Gastrocnemius medialis (tissue), 4 donors: ENCODE measurements at regions of chr6 and their contacts with region 1.

Region 1: GRCh38 chr6:142946181-142946923 is 1.4 kb upstream of the HIVEP2 start:
- DNase-seq: peak; percentile 99
- ATAC-seq: peak; percentile 66 to 68
- H3K4me3 ChIP-seq: peak overlapping the region; percentile 82 to 98 (median 88)
- H3K27ac ChIP-seq: peak overlapping the region; percentile 94 to 100 (median 98)
- H3K4me1 ChIP-seq: peaks cover 28 to 33% of the 10 kb centered on the region in 2 donors
- H3K27me3 ChIP-seq: no peaks in the 10 kb centered on the region
- CTCF ChIP-seq: no peak
- POLR2A ChIP-seq: peak; percentile 91 to 96

Region 2: GRCh38 chr6:142819603-142820337 is 126.6 kb before region 1 on chr6:
- in situ Hi-C with region 1: no loop called
- intact Hi-C with region 1: loop called (anchors 5 kb)
- DNase-seq: no peak
- ATAC-seq: peak in 1 of 2 donors; percentile 55
- H3K4me3 ChIP-seq: peak overlapping the region; percentile 33 to 40 (median 35)
- H3K27ac ChIP-seq: peak overlapping the region; percentile 63 to 73 (median 69)
- H3K4me1 ChIP-seq: peaks cover 50 to 65% of the 10 kb centered on the region in 2 donors
- H3K27me3 ChIP-seq: no peaks in the 10 kb centered on the region
- CTCF ChIP-seq: no peak
- POLR2A ChIP-seq: no peak

Region 3: DNA sequence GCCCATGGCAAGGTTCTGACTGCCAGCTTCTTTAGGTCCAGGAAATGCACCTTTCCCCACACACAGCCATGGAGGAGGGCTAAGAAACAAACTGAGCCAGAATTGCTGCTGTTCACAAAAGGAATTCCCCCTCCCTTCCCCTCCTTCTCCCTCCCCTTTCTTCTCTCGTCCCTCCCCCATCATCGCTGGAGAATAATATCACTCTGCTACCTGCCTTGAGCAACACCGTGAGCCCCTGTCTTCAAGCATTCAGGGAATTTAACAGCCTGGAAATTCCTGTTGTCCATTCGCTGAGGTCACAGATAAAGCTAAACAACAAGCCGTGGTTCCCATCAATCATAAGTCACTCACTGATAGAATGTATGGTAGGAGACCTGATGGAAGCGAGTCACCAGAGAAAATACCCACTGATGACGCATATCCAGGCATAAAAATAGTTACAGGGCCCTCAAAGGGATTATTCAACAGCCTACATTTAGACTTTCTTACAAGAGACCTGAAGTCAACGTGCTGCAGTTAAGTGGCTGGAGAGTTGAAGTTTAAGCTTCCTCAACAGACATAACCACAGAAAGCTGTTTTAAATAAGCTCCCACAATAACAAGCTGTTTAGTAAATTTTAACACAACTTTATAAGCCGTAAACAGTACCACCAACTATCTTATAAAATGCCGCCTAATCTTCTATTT is 61.0 kb before region 1 on chr6:
- in situ Hi-C with region 1: loop called in 1 of 4 experiments (anchors 10 kb)
- intact Hi-C with region 1: loop called (anchors 1 kb)
- DNase-seq: peak; percentile 48 to 53
- ATAC-seq: peak; percentile 94 to 97
- H3K4me3 ChIP-seq: peak overlapping the region; percentile 38 to 54 (median 47)
- H3K27ac ChIP-seq: peak overlapping the region; percentile 81 to 93 (median 84)
- H3K4me1 ChIP-seq: peaks cover 61 to 71% of the 10 kb centered on the region in 2 donors
- H3K27me3 ChIP-seq: no peaks in the 10 kb centered on the region
- CTCF ChIP-seq: no peak
- POLR2A ChIP-seq: peak; percentile 55 to 80

Region 4: DNA sequence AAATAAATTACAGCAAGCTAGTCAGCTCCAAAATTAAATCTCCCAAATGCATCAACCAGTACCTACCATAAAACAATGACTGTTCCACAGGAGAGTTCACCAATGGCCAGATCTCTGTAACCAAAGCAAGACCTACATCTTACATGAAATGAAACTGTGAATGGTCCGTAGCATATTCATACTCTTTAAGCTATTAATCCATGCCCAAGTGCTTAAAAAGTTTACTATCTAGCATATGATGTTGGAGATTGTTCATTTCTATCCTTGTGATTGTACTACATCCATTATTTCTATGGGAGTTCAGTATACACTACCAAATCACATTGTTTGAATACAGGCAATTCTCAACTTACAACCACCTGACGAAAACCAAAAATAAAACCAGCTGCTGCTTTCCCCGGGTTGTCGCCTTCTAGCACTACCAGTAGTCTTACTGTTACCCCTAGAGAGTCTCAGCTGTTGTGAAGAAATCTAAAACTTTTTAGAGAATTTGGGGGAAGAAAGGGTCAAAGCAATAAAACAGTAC is 39.3 kb before region 1 on chr6:
- in situ Hi-C with region 1: no loop called
- intact Hi-C with region 1: no loop called
- DNase-seq: peak; percentile 30 to 57
- ATAC-seq: peak; percentile 94 to 96
- H3K4me3 ChIP-seq: peak overlapping the region in 3 of 4 donors; percentile 17 to 26 (median 26)
- H3K27ac ChIP-seq: peak overlapping the region; percentile 81 to 86 (median 84)
- H3K4me1 ChIP-seq: peaks cover 52 to 58% of the 10 kb centered on the region in 2 donors
- H3K27me3 ChIP-seq: no peaks in the 10 kb centered on the region
- CTCF ChIP-seq: no peak
- POLR2A ChIP-seq: peak in 1 of 2 donors; percentile 53

Region 5: GRCh38 chr6:142926494-142927270 is 19.7 kb before region 1 on chr6:
- in situ Hi-C with region 1: no loop called
- intact Hi-C with region 1: loop called (anchors 1 kb)
- DNase-seq: peak; percentile 77 to 83
- ATAC-seq: peak; percentile 87 to 89
- H3K4me3 ChIP-seq: peak overlapping the region; percentile 66 to 75 (median 68)
- H3K27ac ChIP-seq: peak overlapping the region; percentile 88 to 95 (median 94)
- H3K4me1 ChIP-seq: peaks cover 44 to 49% of the 10 kb centered on the region in 2 donors
- H3K27me3 ChIP-seq: no peaks in the 10 kb centered on the region
- CTCF ChIP-seq: no peak
- POLR2A ChIP-seq: peak; percentile 64 to 78